ENCODE measurements at regions of chr12 and their contacts with region 1.

Region 1: DNA sequence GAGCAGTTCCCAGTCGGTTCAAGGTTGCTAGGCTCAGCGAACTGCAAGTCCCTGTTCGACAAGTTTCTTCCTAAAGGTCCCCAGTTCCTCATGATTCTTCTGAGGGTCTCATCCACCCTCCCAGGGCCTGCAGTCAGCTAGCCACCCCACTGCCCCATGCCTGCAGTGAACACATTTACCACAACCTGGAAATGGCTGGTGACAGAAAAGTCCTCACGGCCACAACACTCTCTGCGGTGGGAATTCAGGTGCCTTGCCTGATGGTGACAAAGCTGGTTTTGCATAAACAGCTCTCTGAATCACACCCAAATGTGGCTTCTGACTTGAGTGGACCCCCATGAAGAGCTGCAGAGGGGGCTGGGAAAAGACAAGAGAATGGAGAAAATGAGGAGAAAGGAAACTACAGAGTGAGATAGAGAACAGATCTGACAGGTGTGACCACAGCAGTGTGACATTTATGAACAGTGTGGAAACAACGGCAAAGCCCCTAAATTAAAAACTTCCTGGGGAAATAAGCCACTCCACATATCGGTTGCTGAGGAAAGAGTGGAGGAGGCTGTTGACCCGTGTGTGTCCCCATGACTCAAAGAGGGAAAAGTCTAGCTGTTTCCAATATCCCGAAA is 1.3 kb upstream of the CD27 start:
- DNase-seq: peak in 3 of 14 experiments; percentile 32 to 47 (median 44)
- ATAC-seq: no peak
- H3K4me3 ChIP-seq: no peak overlapping the region
- H3K4me3 Mint-ChIP-seq: peak overlapping the region; percentile 98
- H3K27ac ChIP-seq: peak overlapping the region; percentile 64 to 65
- H3K27ac Mint-ChIP-seq: peak overlapping the region; percentile 97
- H3K4me1 ChIP-seq: peaks cover 56% of the 10 kb centered on the region
- H3K4me1 Mint-ChIP-seq: peaks cover 63% of the 10 kb centered on the region
- H3K27me3 ChIP-seq: no peaks in the 10 kb centered on the region
- H3K27me3 Mint-ChIP-seq: no peaks in the 10 kb centered on the region
- CTCF ChIP-seq: no peak

Region 2: DNA sequence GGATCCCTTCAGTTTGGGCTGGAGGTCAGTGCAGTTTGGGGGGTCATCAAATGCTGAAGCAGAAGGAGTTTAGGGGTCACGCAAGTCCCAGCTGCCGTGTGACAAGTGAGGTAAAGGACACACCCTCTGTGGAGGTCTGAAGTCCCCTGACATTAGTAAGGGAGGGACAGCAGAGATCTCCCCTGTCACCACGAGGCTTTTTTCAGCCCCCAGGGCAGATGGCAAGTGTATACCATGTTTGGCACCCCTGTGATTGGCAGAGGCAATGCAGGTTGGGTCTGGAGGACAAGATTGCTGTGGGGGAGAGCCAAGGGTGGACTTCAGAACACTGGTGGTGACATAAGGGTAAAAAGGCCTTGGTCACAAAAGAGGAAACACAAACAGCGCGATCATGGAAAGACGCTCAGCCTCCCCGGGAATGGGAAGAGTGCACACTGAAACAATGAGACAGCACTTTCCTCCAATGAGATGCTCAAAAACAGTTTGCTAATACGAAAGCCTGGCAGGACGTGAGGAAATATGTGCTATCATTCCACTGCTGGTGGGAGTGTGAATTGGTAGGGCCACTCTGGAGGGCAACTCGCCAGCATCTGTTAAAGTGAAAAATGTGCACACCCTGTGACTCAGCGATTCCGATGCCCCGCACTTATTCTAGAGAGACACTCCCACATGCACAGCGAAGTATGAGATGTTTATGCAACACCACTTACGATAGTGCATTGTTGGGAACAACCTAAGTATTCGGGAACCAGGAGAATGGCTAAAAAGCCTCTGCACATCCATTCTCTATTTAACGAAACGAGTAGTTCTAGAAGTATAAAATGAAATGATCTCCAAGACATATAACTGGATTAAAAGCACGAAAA is 13.1 kb before region 1 on chr12:
- CTCF ChIA-PET with region 1: interaction called, 4 read pairs
- POLR2A ChIA-PET with region 1: interaction called, 31 read pairs
- intact Hi-C with region 1: loop called (anchors 1 to 2 kb)
- DNase-seq: peak in 3 of 14 experiments; percentile 34 to 48 (median 43)
- ATAC-seq: no peak
- H3K4me3 ChIP-seq: peak overlapping the region; percentile 3
- H3K4me3 Mint-ChIP-seq: no peak overlapping the region
- H3K27ac ChIP-seq: no peak overlapping the region
- H3K27ac Mint-ChIP-seq: peak overlapping the region; percentile 56
- H3K4me1 ChIP-seq: peaks cover 62% of the 10 kb centered on the region
- H3K4me1 Mint-ChIP-seq: peaks cover 70% of the 10 kb centered on the region
- H3K27me3 ChIP-seq: no peaks in the 10 kb centered on the region
- H3K27me3 Mint-ChIP-seq: no peaks in the 10 kb centered on the region
- CTCF ChIP-seq: no peak